ENCODE measurements at regions of chr9 and their contacts with region 1.

Region 1: DNA sequence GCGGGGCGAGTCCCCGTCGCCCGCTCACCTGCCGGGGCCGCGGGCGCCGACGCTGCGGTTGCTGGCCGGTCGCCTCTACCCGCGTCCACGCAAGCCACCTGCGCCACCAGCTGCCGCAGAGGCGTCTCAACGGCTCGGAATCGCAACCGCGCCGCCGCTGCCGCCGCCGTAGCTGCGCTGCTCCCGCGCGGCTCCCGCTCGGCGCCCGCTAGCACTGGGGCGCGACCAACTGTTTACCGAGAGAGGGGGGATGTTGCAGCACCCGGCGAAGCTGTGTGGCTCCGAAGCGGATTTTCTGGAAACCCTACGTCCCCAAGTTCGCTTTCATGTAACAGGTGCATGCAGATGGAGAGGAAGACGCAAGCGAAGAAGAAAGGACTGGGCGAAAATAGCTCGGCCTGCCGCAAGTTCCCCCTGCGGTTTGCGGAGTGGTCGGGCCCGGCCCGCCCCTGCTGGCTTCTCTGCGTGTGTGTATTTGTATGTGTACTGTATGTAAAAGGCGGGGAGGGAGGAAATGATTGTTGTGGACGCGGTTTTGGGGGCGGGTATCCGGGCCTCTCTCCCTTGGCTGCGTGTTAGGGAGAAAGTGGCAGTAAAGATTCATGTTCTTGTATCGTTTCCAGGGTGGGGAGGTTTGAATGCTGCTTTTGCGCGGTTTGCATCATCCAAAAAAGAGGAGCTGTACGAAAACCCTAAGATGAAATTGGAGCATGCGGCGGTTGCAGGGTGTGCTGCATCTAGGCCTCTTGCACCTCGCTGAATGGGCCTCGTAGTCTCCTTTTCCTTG is at the start of gene PSIP1:
- DNase-seq: peak; percentile 88
- H3K4me3 ChIP-seq: peak within 1 kb of the TSS; percentile 82
- CTCF ChIP-seq: no peak

Region 2: GRCh38 chr9:15253197-15253596 is 257.8 kb before region 1 on chr9:
- in situ Hi-C with region 1: no loop called
- DNase-seq: no peak
- H3K4me3 ChIP-seq: no peak overlapping the region
- CTCF ChIP-seq: no peak

Region 3: GRCh38 chr9:15422372-15423230 is 88.4 kb before region 1 on chr9 and contains the start of gene SNAPC3:
- in situ Hi-C with region 1: loop called (anchors 10 kb)
- DNase-seq: peak; percentile 97
- H3K4me3 ChIP-seq: peak within 1 kb of the TSS; percentile 64
- CTCF ChIP-seq: no peak

Region 4: DNA sequence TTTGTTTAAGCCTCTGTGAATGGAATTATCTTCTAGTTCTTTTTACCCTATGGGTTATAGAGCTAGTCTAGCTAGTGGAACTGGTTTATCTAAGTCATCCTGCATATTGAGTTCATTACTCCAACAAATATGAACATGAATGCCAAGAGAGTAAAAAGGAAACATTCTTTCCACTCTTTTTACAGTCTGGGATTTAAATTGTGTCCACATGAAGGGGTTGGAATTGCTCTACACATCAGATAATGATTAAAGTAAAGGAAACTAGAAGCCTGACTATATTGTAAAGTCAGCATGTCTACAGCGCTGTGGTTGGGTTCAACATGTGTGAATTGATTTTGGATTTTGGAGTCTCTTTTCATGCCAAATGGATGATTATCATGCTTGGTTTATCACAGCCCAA is 215.0 kb after region 1 on chr9:
- in situ Hi-C with region 1: no loop called
- DNase-seq: peak; percentile 13
- H3K4me3 ChIP-seq: no peak overlapping the region
- CTCF ChIP-seq: no peak